ENCODE measurements at regions of chr2 and their contacts with region 1.

Region 1: GRCh38 chr2:195533771-195534642 is 123.0 kb upstream of the SLC39A10 start:
- DNase-seq: peak; percentile 87
- H3K4me3 Mint-ChIP-seq: peak overlapping the region; percentile 74
- H3K27ac Mint-ChIP-seq: peak overlapping the region; percentile 98
- H3K4me1 Mint-ChIP-seq: peaks cover 80% of the 10 kb centered on the region
- H3K27me3 Mint-ChIP-seq: no peaks in the 10 kb centered on the region

Region 2: GRCh38 chr2:195364015-195364965 is 169.7 kb before region 1 on chr2:
- CTCF ChIA-PET with region 1: no interaction called
- POLR2A ChIA-PET with region 1: no interaction called
- intact Hi-C with region 1: loop called (anchors 2 kb)
- DNase-seq: no peak
- H3K4me3 Mint-ChIP-seq: no peak overlapping the region
- H3K27ac Mint-ChIP-seq: no peak overlapping the region
- H3K4me1 Mint-ChIP-seq: peaks cover 29% of the 10 kb centered on the region
- H3K27me3 Mint-ChIP-seq: no peaks in the 10 kb centered on the region

Region 3: GRCh38 chr2:195477248-195477995 is 56.6 kb before region 1 on chr2:
- CTCF ChIA-PET with region 1: no interaction called
- POLR2A ChIA-PET with region 1: no interaction called
- intact Hi-C with region 1: loop called (anchors 2 kb)
- DNase-seq: no peak
- H3K4me3 Mint-ChIP-seq: no peak overlapping the region
- H3K27ac Mint-ChIP-seq: peak overlapping the region; percentile 10
- H3K4me1 Mint-ChIP-seq: peaks cover 17% of the 10 kb centered on the region
- H3K27me3 Mint-ChIP-seq: no peaks in the 10 kb centered on the region

Region 4: GRCh38 chr2:195498176-195498575 is 35.8 kb before region 1 on chr2:
- CTCF ChIA-PET with region 1: interaction called, 12 read pairs
- POLR2A ChIA-PET with region 1: interaction called, 3 read pairs
- intact Hi-C with region 1: loop called (anchors 1 kb)
- DNase-seq: peak; percentile 66
- H3K4me3 Mint-ChIP-seq: no peak overlapping the region
- H3K27ac Mint-ChIP-seq: no peak overlapping the region
- H3K4me1 Mint-ChIP-seq: peaks cover 32% of the 10 kb centered on the region
- H3K27me3 Mint-ChIP-seq: no peaks in the 10 kb centered on the region

Region 5: DNA sequence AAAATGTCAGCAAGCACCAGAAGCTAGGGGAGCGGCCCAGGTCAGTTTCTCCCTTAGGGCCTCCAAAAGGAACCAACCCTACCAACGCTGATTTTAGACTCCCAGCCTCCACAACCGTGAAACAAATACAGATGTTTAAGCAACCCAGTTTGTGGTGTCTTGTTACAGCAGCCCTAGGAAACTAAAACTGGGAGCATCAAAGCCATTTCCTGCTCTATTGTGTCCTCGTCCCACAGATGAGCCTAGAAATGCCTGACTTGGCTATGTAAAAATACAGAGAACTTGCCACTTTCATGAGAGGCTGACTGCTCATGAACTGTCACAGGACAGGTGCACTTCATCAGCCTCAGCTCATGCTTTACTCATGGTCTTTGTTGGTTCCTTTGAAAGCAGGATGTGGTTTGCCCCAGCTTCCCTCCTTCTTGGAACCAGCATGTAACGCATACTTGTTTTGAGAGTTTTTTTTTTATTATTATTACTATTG is 25.5 kb after region 1 on chr2:
- CTCF ChIA-PET with region 1: interaction called, 47 read pairs
- POLR2A ChIA-PET with region 1: interaction called, 127 read pairs
- intact Hi-C with region 1: loop called (anchors 1 kb)
- DNase-seq: peak; percentile 91
- H3K4me3 Mint-ChIP-seq: peak overlapping the region; percentile 63
- H3K27ac Mint-ChIP-seq: peak overlapping the region; percentile 92
- H3K4me1 Mint-ChIP-seq: peaks cover 61% of the 10 kb centered on the region
- H3K27me3 Mint-ChIP-seq: no peaks in the 10 kb centered on the region

Region 6: DNA sequence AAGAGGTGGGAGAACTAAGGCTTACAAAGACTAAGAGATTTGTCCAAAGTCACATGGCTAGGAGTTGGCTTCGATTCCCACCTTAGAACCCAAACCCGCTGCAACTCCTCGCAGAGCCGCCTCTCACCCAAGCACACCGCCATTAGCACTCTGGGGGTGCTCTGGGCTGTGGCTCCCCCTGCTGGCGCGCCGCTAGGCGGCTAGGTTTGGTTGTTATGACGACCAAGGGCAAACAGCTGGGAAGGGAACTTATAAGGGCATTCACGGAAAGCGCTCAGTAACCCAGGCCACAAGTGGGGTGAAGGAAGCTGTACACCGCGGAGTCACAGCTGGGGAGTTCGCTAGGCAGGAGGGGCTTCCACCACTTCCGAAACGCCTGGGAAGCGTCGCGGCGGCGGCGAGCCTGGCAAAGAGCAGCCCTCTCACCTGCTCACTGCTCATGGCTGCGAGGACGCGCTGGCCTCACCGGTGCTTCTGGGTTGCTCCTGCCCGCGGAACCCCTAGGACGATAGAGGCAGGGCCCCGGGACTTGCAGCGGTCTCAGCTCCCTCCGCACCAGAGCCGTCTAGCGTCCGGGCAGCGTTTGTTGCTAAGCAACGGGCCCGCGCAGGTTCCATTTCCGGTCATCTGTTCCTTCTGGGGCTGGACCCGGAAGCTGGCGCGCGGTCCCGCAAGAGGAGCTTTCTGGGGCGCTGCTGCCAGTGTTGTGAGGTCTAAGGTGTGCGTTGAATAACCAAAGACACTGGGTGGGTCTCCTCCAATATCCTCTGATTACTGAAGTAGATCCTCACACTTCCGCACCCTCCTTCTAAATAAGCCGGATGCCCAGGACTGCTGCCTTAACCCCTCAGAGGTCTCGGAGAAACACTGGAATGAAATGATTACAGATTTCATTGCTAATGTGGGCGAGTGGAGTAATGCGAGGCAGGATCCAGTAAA is 534.5 kb after region 1 on chr2 and contains the start of gene DNAH7:
- CTCF ChIA-PET with region 1: interaction called, 4 read pairs
- POLR2A ChIA-PET with region 1: no interaction called
- intact Hi-C with region 1: loop called (anchors 2 kb)
- DNase-seq: peak; percentile 95
- H3K4me3 Mint-ChIP-seq: peak within 1 kb of the TSS; percentile 88
- H3K27ac Mint-ChIP-seq: peak within 1 kb of the TSS; percentile 46
- H3K4me1 Mint-ChIP-seq: peaks cover 9% of the 10 kb centered on the region
- H3K27me3 Mint-ChIP-seq: peaks cover 2% of the 10 kb centered on the region
- total RNA-seq, gene DNAH7: 0.07 to 0.17 TPM

Region 7: GRCh38 chr2:197209742-197210408 is 1675.9 kb after region 1 on chr2:
- CTCF ChIA-PET with region 1: no interaction called
- POLR2A ChIA-PET with region 1: no interaction called
- intact Hi-C with region 1: loop called (anchors 10 kb)
- DNase-seq: peak; percentile 86
- H3K4me3 Mint-ChIP-seq: peak overlapping the region; percentile 58
- H3K27ac Mint-ChIP-seq: peak overlapping the region; percentile 94
- H3K4me1 Mint-ChIP-seq: peaks cover 98% of the 10 kb centered on the region
- H3K27me3 Mint-ChIP-seq: no peaks in the 10 kb centered on the region

Measured in activated CD4-positive, alpha-beta memory T cell treated with anti-CD3 and anti-CD28 coated beads for 36 hours (primary cell).